Caco-2 (cell line): ENCODE measurements at regions of chr2 and their contacts with region 1.

Region 1: DNA sequence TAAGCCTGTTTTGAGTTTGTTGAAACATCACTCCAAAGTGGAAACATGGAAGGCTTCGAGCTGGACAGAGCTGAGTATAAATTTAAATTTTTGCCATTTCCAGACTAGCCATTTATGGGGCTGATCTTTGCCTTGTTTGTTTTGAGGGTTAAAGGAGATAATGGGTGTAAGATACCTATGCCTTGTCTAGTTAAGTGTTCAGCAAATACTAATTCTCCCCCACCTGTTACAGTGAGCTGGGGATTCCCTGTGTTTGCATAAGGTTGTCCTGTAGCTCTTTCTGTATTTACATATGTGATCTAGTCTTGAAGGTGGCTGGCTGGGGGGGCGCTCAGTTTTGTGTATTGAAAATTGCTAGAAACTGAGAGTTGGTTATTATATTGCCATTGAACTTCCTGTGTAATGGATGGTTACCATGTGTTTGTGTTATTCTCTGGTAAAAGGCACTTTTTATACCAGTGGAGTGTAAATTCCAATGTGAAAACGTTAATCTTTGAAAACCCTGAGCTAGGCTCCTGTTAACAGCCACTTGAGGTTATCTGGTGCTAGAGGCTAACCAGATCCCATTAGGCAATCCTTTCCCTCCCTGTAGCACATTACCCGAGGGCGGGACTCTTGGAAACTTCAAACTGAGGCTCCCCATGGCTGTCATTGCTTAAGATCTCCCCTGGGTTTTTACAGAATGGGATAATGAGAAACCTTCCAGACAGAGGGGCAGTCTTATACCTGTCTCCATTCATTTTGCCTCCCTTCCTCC is 26.7 kb downstream of the TANC1 start:
- DNase-seq: peak; percentile 64 to 72
- H3K4me3 ChIP-seq: no peak overlapping the region
- H3K4me3 Mint-ChIP-seq: peak overlapping the region; percentile 63
- H3K27ac Mint-ChIP-seq: peak overlapping the region; percentile 57
- H3K4me1 ChIP-seq: peaks cover 50% of the 10 kb centered on the region
- H3K4me1 Mint-ChIP-seq: peaks cover 49% of the 10 kb centered on the region
- H3K27me3 ChIP-seq: no peaks in the 10 kb centered on the region
- H3K27me3 Mint-ChIP-seq: no peaks in the 10 kb centered on the region
- CTCF ChIP-seq: no peak

Region 2: GRCh38 chr2:158948964-158949699 is 46.0 kb before region 1 on chr2:
- CTCF ChIA-PET with region 1: no interaction called
- POLR2A ChIA-PET with region 1: no interaction called
- intact Hi-C with region 1: loop called (anchors 1 kb)
- DNase-seq: peak in 1 of 2 experiments; percentile 71
- H3K4me3 ChIP-seq: no peak overlapping the region
- H3K4me3 Mint-ChIP-seq: peak overlapping the region; percentile 28
- H3K27ac Mint-ChIP-seq: peak overlapping the region; percentile 13
- H3K4me1 ChIP-seq: peaks cover 34% of the 10 kb centered on the region
- H3K4me1 Mint-ChIP-seq: peaks cover 29% of the 10 kb centered on the region
- H3K27me3 ChIP-seq: no peaks in the 10 kb centered on the region
- H3K27me3 Mint-ChIP-seq: no peaks in the 10 kb centered on the region
- CTCF ChIP-seq: no peak

Region 3: DNA sequence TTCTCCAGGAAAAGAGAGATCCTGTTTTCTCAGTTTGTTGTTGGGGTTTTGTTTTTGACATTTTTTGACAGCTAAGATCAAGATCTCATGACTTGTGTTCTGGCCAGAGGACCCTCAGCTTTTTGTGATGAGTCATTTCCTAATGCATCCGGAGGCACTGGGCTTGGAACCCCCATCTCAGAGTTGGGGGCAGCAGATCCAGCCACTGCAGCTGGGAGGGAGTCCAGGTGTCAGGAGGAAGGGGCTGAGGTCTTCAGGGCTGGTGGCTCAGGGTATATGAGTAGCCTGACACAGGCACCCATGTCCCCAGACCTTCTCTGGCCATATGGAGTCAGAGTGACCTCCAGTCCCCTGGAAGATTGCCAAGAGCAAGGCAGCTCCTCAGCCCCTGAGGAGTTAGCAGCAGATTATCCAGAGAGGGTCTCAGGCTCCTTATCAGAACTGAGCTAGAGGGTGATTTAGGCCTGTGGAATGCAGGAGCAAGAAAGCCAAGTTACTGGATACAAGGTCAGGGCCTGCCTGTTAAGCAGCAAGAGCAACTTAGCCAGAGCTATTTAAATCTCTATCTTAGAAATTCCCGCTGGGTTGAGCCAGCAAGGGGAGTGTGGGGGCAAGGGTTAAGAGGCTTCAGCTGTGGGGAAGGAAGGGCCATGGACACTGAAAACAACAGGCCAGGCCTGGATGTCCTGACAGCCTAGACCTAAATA is 35.7 kb after region 1 on chr2:
- CTCF ChIA-PET with region 1: interaction called, 7 read pairs
- POLR2A ChIA-PET with region 1: no interaction called
- intact Hi-C with region 1: loop called (anchors 2 kb)
- DNase-seq: peak; percentile 63 to 85
- H3K4me3 ChIP-seq: no peak overlapping the region
- H3K4me3 Mint-ChIP-seq: peak overlapping the region; percentile 42
- H3K27ac Mint-ChIP-seq: peak overlapping the region; percentile 91
- H3K4me1 ChIP-seq: peaks cover 44% of the 10 kb centered on the region
- H3K4me1 Mint-ChIP-seq: peaks cover 55% of the 10 kb centered on the region
- H3K27me3 ChIP-seq: no peaks in the 10 kb centered on the region
- H3K27me3 Mint-ChIP-seq: no peaks in the 10 kb centered on the region
- CTCF ChIP-seq: no peak